ENCODE measurements at regions of chr3 and their contacts with region 1.

Region 1: DNA sequence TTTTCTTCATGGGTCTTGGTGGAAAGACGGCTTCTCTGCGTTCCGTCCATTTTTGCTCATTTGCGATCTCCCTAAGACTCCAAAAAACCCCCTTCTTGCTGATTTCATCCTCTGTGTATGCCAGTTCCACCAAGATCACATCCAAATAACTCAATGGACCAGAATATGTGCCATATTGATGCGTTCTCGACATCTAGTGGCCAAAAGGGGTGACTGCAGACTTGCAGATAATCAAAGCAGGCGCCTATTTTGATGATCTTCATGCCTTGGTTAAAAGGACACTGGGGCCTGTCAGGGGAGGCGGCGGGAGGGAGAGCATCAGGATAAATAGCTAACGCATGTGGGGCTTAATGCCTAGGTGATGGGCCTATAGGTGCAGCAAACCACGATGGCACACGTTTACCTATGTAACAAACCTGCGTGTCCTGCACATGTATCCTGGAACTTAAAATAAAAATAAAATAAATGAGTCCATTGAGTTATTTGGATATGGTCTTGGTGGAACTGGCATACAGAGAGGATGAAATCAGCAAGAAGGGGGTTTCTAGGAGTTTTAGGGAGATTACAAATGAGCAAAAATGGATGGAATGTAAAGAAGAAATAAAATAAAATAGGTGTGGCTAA is 104.2 kb upstream of the RAD18 start:
- DNase-seq: peak; percentile 47
- ATAC-seq: peak; percentile 94
- H3K4me3 ChIP-seq: no peak overlapping the region
- H3K27ac ChIP-seq: no peak overlapping the region
- H3K4me1 ChIP-seq: no peaks in the 10 kb centered on the region
- H3K27me3 ChIP-seq: no peaks in the 10 kb centered on the region
- CTCF ChIP-seq: peak; percentile 86 to 93 (median 86); a peak in 5 of 6 replicates
- POLR2A ChIP-seq: no peak
- RAD21 ChIP-seq: peak; percentile 91

Region 2: DNA sequence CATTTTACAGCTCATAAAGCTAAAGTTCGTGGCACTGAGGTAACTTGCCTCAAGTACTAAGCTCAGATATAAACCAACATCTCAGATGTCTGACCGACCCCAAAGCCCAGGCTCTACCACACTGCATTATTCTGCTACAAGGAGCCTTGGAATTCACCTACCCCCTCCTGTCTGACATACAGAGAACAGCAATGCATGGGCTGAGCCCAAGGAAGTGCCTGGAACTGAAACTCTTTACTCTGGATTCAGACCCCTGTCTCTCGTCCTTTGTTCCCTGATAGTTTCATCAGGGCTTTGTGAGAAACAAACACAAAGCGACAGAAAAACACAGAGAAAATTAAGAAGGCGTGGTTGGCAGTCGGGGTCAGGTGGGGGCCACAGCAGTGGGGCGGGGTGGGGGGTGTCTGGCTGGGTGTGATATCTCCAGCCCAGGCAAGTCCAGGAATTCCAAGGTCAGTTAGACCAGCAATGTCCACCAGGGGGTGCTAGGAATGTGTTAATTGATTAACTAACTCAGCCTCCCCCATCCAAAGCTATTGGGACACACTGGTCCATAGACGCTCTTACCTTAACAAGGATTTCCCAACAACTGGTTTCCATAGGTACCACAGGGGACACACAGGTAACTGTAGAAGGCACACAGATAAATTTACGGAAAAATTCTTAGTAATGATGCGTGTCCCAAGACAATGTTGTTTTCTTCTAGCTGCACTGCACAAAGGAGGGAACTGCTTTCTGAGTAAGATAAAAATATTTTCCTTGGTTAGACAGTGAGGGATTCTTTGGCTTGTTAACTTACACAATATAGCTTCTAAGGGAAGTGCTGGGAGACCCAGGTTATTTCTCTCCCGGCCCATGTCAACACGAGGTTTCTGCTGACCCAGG is 404.0 kb before region 1 on chr3:
- CTCF ChIA-PET with region 1: no interaction called
- POLR2A ChIA-PET with region 1: no interaction called
- RAD21 ChIA-PET with region 1: no interaction called
- intact Hi-C with region 1: loop called (anchors 1 kb)
- DNase-seq: peak; percentile 71
- ATAC-seq: peak; percentile 89
- H3K4me3 ChIP-seq: no peak overlapping the region
- H3K27ac ChIP-seq: no peak overlapping the region
- H3K4me1 ChIP-seq: peaks cover 8 to 33% of the 10 kb centered on the region in 2 experiments
- H3K27me3 ChIP-seq: no peaks in the 10 kb centered on the region
- CTCF ChIP-seq: peak; percentile 65 to 76 (median 66); a peak in 5 of 6 replicates
- POLR2A ChIP-seq: no peak
- RAD21 ChIP-seq: peak; percentile 74

Region 3: DNA sequence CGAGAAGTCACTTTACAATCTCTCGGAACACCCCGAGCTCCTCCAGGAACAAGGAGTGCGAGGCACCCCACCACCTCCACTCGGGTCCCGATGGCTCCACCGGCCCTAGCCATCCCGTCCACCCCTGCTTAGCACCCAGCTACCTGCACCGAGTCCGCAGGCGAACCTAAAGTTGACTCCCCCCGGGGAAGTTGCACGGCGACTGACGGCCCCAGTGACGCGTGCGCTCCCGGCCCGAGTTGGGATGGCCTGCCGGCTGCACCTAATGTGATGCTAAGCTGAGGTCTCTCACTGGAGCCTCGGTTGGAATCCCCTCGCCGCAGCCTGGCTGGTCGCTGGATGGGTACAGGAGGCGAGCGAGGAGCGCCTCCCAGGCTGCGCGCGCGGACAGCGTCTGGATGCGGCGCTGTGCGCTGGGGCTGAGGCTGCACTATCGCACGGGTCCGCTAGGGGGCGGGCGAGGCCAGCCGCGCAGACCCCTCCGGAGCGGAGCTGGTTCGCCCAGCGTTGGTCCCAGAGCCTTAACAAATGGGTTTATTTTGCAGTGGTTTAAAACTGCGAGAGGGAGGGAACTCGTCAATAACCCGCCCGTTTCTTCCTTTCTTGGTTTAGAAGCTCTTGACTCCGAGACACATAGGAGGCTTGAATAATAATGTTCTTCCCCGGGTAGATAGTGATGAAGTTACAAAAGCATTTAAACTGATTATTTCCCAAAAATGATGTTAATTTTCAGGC is 298.2 kb before region 1 on chr3 and contains the start of gene OXTR:
- CTCF ChIA-PET with region 1: no interaction called
- POLR2A ChIA-PET with region 1: no interaction called
- RAD21 ChIA-PET with region 1: no interaction called
- intact Hi-C with region 1: loop called (anchors 5 kb)
- DNase-seq: no peak
- ATAC-seq: peak; percentile 100
- H3K4me3 ChIP-seq: peak within 1 kb of the TSS in 1 of 2 experiments; percentile 33; a peak in 1 of 4 replicates
- H3K27ac ChIP-seq: no peak within 1 kb of the TSS
- H3K4me1 ChIP-seq: peaks cover 0 to 10% of the 10 kb centered on the region in 2 experiments; a peak in 1 of 4 replicates
- H3K27me3 ChIP-seq: no peaks in the 10 kb centered on the region
- CTCF ChIP-seq: peak; percentile 97 to 98 (median 97)
- POLR2A ChIP-seq: no peak
- RAD21 ChIP-seq: peak; percentile 90
- total RNA-seq, gene OXTR: 1.3 TPM

Region 4: GRCh38 chr3:8970971-8971589 is 96.4 kb before region 1 on chr3:
- CTCF ChIA-PET with region 1: no interaction called
- POLR2A ChIA-PET with region 1: no interaction called
- RAD21 ChIA-PET with region 1: no interaction called
- intact Hi-C with region 1: loop called (anchors 1 kb)
- DNase-seq: peak; percentile 45
- ATAC-seq: peak; percentile 78
- H3K4me3 ChIP-seq: no peak overlapping the region
- H3K27ac ChIP-seq: no peak overlapping the region
- H3K4me1 ChIP-seq: peaks cover 0 to 4% of the 10 kb centered on the region in 2 experiments; a peak in 1 of 4 replicates
- H3K27me3 ChIP-seq: no peaks in the 10 kb centered on the region; the same call in 1 of the 2 replicates
- CTCF ChIP-seq: peak; percentile 89 to 98 (median 95)
- POLR2A ChIP-seq: no peak
- RAD21 ChIP-seq: peak; percentile 98

Region 5: DNA sequence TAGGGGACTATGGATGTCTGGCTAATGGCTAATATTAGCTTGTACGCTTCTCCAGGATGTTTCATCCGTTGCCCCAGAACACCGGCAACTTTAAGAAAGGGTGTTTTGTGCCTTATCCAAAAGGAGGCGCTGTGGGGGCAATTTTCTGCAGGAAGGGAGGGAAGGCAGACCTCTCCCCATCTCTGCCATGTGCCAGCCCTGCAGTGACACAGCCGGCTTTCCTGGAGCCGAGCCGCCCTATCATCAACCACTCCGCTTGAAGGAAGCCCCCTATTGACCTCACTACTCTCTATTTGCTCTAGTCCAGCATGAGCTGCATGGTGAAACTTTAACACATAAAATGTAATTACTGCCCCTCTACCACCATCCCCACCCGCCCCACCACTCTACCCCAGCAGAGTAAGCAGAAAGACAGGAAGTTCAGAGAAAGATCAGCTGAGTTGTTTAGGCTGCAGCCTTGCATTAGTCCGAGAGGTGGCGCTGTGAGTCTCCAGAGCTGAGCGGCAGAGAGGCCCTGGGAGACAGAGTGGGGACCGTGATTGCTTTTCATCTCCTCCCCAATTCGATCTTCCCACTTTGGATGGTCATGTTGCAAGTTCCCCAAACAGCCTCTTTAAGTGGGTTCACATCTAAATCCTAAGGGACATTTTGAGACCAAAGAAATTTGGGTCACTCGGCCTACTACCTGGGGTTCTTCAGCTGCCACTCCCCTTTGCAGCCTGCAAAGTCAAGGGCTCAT is 79.7 kb before region 1 on chr3:
- CTCF ChIA-PET with region 1: no interaction called
- POLR2A ChIA-PET with region 1: no interaction called
- RAD21 ChIA-PET with region 1: no interaction called
- intact Hi-C with region 1: loop called (anchors 1 kb)
- DNase-seq: peak; percentile 32
- ATAC-seq: peak; percentile 95
- H3K4me3 ChIP-seq: no peak overlapping the region
- H3K27ac ChIP-seq: no peak overlapping the region
- H3K4me1 ChIP-seq: no peaks in the 10 kb centered on the region
- H3K27me3 ChIP-seq: no peaks in the 10 kb centered on the region
- CTCF ChIP-seq: peak; percentile 74 to 87 (median 84); a peak in 5 of 6 replicates
- POLR2A ChIP-seq: no peak
- RAD21 ChIP-seq: peak; percentile 78

Region 6: DNA sequence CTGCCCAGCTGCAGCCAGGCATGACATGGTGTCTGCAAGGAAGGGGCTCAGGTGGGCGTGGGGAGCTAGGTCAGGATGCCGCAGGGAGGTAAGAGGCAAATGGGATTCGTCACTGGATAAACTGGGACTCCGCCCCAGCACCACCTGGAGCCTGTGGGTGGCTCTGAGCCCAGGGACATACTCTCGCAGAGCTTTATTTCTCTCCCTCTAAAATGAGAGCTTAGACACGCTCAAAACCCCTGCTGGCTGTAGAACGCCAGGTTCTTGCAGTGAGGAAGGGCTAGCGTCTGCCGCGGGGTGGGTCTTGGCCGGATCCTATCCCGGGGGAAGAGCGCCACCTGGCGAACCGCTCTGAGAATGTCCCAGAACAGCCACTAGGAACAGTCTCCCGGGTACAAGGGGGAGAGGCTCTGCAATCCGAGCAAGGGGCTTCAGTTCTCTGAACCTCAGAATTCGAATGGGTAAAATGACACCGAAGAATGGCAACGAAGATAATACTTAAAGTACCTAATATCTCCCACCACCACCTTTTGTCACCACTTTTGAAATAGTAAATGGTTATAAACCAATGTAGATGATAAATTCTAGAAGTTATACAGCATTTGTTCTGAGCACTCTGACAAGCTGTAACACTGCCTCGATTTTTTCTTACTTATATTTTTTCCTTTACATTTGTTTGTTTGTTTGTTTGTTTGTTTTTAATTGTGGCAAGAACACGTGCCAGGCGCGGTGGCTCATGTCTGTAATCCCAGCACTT is 235.1 kb after region 1 on chr3:
- CTCF ChIA-PET with region 1: no interaction called
- POLR2A ChIA-PET with region 1: no interaction called
- RAD21 ChIA-PET with region 1: interaction called in 1 of 2 experiments, 3 read pairs
- intact Hi-C with region 1: loop called (anchors 5 kb)
- DNase-seq: peak; percentile 56
- ATAC-seq: peak; percentile 98
- H3K4me3 ChIP-seq: peak overlapping the region in 1 of 2 experiments; percentile 37; a peak in 3 of 4 replicates
- H3K27ac ChIP-seq: no peak overlapping the region
- H3K4me1 ChIP-seq: peaks cover 0 to 12% of the 10 kb centered on the region in 2 experiments; a peak in 2 of 4 replicates
- H3K27me3 ChIP-seq: no peaks in the 10 kb centered on the region
- CTCF ChIP-seq: peak; percentile 81 to 97 (median 94)
- POLR2A ChIP-seq: no peak
- RAD21 ChIP-seq: peak; percentile 96

Measured in HCT116 (cell line).